BJ (cell line): ENCODE measurements at regions of chr2 and their contacts with region 1.

Region 1: GRCh38 chr2:10072656-10073480 is 7.3 kb downstream of the CYS1 start:
- DNase-seq: no peak
- H3K4me3 ChIP-seq: no peak overlapping the region
- H3K27me3 ChIP-seq: 0 out of 2 replicates have a peak, but pooled peaks cover 2% of the 10 kb centered on the region
- CTCF ChIP-seq: peak; percentile 93

Region 2: GRCh38 chr2:10057231-10058107 is 15.4 kb before region 1 on chr2:
- CTCF ChIA-PET with region 1: interaction called, 40 read pairs
- POLR2A ChIA-PET with region 1: no interaction called
- DNase-seq: no peak
- H3K4me3 ChIP-seq: peak overlapping the region; percentile 3; the same call in 1 of the 2 replicates
- H3K27me3 ChIP-seq: no peaks in the 10 kb centered on the region; the same call in 1 of the 2 replicates
- CTCF ChIP-seq: no peak

Region 3: DNA sequence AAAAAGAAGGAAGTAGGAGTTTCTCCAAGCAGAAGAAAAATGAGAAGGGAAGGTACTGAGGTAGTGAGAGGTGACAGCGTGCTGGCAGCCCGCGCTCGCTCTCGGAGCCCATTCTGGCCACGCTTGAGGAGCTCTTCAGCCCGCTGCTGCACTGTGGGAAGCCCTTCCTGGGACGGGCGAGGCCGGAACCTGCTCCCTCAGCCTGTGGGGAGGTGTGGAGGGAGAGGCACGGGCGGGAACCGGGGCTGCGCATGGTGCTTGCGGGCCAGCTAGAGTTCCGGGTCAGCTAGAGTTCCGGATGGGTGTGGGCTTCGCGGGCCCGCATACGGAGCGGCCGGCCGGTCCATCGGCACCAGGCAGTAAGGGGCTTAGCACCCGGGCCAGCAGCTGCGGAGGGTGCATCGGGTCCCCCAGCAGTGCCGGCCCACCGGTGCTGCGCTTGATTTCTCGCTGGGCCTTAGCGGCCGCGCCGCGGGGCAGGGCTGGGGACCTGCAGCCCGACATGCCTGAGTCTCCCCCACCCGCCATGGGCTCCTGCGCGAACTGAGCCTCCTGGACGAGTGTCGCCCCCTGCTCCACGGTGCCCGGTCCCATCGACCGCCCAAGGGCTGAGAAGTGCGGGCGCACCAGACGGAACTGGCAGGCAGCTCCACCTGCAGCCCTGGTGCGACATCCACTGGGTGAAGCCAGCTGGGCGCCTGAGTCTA is 18.5 kb after region 1 on chr2:
- CTCF ChIA-PET with region 1: interaction called, 118 read pairs
- POLR2A ChIA-PET with region 1: no interaction called
- DNase-seq: no peak
- H3K4me3 ChIP-seq: no peak overlapping the region
- H3K27me3 ChIP-seq: peaks cover 18% of the 10 kb centered on the region
- CTCF ChIP-seq: no peak

Region 4: GRCh38 chr2:10097352-10098148 is 24.7 kb after region 1 on chr2:
- CTCF ChIA-PET with region 1: interaction called, 118 read pairs
- POLR2A ChIA-PET with region 1: no interaction called
- DNase-seq: no peak
- H3K4me3 ChIP-seq: no peak overlapping the region
- H3K27me3 ChIP-seq: no peaks in the 10 kb centered on the region
- CTCF ChIP-seq: peak; percentile 99

Region 5: DNA sequence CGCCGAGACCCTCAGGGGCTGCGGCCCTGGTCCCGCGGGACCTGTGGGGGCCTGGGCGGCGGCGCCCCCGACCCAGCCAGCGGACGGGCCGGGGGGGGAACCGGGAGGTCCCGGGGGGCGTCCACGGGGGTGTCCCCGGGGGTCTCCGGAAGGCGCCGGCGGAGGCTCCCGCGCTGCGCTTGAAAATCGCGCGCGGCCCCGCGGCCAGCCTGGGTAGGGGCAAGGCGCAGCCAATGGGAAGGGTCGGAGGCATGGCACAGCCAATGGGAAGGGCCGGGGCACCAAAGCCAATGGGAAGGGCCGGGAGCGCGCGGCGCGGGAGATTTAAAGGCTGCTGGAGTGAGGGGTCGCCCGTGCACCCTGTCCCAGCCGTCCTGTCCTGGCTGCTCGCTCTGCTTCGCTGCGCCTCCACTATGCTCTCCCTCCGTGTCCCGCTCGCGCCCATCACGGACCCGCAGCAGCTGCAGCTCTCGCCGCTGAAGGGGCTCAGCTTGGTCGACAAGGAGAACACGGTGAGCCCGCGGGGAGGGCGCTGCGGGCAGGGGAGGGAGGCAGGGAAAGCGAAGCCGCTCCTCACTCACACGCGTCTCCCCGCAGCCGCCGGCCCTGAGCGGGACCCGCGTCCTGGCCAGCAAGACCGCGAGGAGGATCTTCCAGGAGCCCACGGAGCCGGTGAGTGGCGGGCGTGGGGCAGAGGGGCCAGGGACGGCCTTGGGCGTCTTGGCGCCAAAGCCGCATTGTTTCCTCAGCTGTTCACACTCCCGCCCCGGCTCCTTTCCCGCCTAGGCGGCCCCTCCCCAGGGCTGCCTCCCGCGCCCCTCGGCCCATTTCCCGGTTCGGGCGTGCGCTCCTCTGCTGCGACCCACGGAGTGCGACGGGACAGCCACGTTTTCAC is 49.8 kb after region 1 on chr2 and contains the start of gene RRM2:
- CTCF ChIA-PET with region 1: interaction called, 28 read pairs
- POLR2A ChIA-PET with region 1: no interaction called
- DNase-seq: no peak
- H3K4me3 ChIP-seq: peak within 1 kb of the TSS; percentile 80
- H3K27me3 ChIP-seq: no peaks in the 10 kb centered on the region
- CTCF ChIP-seq: no peak
- polyA plus RNA-seq, gene RRM2: 23.5 and 31.8 TPM in 2 replicates

Region 6: DNA sequence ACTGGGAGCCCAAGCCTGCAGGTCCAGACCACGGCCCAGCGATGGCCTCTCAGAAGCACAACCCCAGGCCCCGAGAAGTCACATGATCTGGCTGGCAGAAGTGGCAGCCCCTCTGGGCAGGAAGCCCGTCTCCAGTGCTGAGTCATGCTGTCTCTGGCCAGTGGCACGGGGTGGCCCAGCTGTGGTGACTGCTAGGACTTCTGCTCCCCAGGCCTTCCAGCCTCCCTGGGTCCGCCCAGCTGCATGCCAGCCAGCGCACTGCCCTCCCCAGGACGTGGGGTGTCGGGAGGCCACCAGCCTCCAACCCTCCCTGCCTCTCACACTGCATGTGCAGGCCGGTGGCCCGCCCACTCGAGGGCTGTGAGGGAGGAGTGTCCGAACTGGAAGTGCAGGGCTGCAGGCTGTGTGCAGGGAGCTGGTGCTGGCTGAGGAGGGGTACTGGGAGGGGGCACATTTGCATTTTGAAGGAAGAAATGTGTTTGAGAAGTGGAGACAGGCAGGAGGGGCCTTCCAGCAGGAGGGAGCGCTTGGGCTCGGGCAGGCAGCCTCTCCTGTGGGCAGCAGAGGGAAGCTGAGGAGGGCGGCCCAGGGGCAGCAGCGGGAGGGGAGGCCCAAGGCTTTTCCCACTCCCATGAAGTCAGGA is 212.8 kb after region 1 on chr2:
- CTCF ChIA-PET with region 1: no interaction called
- POLR2A ChIA-PET with region 1: interaction called, 10 read pairs
- DNase-seq: no peak
- H3K4me3 ChIP-seq: no peak overlapping the region
- H3K27me3 ChIP-seq: no peaks in the 10 kb centered on the region
- CTCF ChIP-seq: no peak